ENCODE measurements at regions of chr19 and their contacts with region 1.

Region 1: GRCh38 chr19:21505459-21506451 is at the start of gene ZNF429:
- DNase-seq: peak; percentile 97
- H3K4me3 Mint-ChIP-seq: peak within 1 kb of the TSS; percentile 99
- H3K27ac Mint-ChIP-seq: peak within 1 kb of the TSS; percentile 96
- H3K4me1 Mint-ChIP-seq: peaks cover 3% of the 10 kb centered on the region
- H3K27me3 Mint-ChIP-seq: no peaks in the 10 kb centered on the region
- total RNA-seq, gene ZNF429: 3.0 and 3.3 TPM in 2 replicates

Region 2: DNA sequence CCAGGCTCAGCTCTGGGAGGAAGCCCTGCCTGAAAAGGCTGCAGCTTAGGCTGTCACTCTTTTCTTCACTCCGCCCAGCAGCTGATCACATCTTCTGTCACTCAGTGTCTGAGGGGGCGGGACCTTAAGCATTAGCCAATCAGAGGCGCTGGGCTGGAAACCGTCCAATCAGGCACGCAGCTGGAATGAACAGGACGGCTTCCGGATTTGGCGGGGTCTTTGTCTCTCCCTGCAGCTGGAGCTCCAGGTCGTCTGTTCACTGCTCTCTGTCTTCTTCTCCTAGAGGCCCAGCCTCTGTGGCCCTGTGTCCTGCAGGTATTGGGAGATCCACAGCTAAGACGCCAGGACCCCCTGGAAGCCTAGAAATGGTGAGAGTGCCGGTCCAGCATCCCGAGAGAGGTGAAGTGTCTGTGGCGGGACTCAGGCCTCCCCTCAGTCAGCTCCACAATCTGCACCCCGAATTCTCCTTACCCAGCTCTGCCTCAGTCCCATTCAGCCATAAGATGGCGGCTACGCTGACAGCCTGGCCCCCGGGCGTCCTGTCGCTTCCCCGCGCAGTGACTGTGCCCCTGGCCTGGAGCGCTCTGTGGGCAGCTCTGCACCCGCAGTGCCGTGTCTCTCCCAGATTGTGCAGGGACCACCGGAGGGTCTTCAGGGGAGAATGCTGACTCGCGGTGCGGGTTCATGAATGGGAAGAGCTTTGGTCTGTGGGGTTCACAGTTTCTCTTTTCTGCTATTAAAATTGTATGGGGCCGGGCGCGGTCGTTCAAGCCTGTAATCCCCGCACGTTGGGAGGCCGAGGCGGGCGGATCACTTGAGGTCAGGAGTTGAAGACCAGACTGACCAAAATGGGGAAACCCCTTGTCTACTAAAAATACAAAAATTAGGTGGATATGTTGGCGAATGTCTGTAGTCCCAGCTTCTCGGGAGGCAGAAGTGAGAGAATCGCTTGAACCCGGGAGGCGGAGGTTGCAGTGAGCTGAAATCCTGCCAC is 729.4 kb before region 1 on chr19 and contains the start of gene ZNF66:
- intact Hi-C with region 1: loop called (anchors 10 kb)
- DNase-seq: peak; percentile 98
- H3K4me3 Mint-ChIP-seq: peak within 1 kb of the TSS; percentile 96
- H3K27ac Mint-ChIP-seq: peak within 1 kb of the TSS; percentile 95
- H3K4me1 Mint-ChIP-seq: peaks cover 4% of the 10 kb centered on the region
- H3K27me3 Mint-ChIP-seq: no peaks in the 10 kb centered on the region
- total RNA-seq, gene ZNF66: 7.9 and 10.7 TPM in 2 replicates

Region 3: GRCh38 chr19:21082011-21082975 is 423.5 kb before region 1 on chr19 and contains the start of gene ZNF714:
- intact Hi-C with region 1: loop called (anchors 5 kb)
- DNase-seq: peak; percentile 96
- H3K4me3 Mint-ChIP-seq: peak within 1 kb of the TSS; percentile 96
- H3K27ac Mint-ChIP-seq: peak within 1 kb of the TSS; percentile 99
- H3K4me1 Mint-ChIP-seq: peaks cover 26% of the 10 kb centered on the region
- H3K27me3 Mint-ChIP-seq: no peaks in the 10 kb centered on the region
- total RNA-seq, gene ZNF714: 18.8 and 20.4 TPM in 2 replicates

Region 4: DNA sequence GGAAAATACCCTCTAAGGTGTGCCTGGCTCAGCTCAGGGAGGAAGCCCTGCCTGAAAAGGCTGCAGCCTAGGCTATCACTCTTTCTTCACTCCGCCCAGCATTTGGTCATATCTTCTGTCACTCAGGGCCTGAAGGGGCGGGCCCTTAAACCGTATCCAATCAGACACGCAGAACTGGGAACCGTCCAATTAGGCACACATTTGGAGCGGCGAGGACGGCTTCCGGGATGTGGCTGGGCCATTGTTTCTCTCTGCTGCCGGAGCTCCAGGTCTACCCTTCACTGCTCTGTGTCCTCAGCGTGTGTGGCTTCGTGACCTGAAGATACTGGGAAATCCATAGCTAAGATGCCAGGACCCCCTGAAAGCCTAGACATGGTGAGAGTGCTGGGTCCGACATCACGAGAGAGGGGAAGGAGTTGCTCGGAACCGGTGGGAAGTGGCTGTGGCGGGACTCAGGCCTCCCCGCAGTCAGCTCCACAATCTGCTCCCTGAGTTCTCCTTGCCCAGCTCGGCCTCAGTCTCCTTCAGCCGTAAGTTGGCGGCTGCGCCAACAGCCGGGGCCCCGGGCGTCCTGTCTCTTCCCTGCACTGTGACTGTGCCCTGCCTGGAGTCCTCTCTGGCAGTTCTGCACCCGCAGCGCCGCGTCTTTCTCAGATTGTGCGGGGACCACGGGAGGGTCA is 108.7 kb before region 1 on chr19 and contains the start of gene ZNF493:
- intact Hi-C with region 1: loop called (anchors 1 kb)
- DNase-seq: peak; percentile 96
- H3K4me3 Mint-ChIP-seq: peak within 1 kb of the TSS; percentile 93
- H3K27ac Mint-ChIP-seq: peak within 1 kb of the TSS; percentile 85
- H3K4me1 Mint-ChIP-seq: peaks cover 8% of the 10 kb centered on the region
- H3K27me3 Mint-ChIP-seq: no peaks in the 10 kb centered on the region
- total RNA-seq, gene ZNF493: 12.2 and 12.5 TPM in 2 replicates

Region 5: GRCh38 chr19:21604351-21604926 is 98.7 kb after region 1 on chr19:
- intact Hi-C with region 1: no loop called
- DNase-seq: peak; percentile 59
- H3K4me3 Mint-ChIP-seq: peak overlapping the region; percentile 80
- H3K27ac Mint-ChIP-seq: peak overlapping the region; percentile 22
- H3K4me1 Mint-ChIP-seq: peaks cover 16% of the 10 kb centered on the region
- H3K27me3 Mint-ChIP-seq: no peaks in the 10 kb centered on the region

Region 6: DNA sequence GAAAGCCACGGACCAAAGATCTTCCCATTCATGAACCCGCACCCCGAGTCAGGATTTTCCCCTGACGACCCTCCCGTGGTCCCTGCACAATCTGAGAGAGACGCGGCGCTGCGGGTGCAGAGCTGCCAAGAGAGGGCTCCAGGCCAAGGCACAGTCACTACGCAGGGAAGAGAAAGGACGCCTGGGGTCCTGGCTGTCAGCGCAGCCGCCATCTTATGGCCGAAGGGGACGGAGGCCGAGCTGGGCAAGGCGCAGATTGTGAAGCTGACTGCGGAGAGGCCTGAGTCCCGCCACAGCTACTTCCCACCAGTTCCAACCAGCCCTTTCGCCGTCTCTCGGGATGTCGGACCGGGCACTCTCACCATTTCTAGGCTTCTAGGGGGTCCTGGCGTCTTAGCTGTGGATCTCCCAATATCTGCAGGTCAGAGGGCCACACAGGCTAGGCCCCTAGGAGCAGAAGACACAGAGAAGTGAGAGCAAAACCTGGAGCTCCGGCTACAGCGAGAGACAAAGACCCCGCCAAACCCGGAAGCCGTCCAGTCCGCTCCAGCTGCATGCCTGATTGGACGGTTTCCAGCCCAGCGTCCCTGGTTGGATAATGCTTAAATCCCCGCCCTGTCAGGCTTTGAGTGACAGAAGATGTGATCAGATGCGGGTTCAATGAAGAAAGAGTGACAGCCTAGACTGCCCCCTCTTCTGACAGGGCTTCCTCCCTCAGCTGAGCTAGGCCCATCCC is 261.5 kb after region 1 on chr19 and contains the start of gene ZNF100:
- intact Hi-C with region 1: loop called (anchors 2 kb)
- DNase-seq: peak; percentile 95
- H3K4me3 Mint-ChIP-seq: peak within 1 kb of the TSS; percentile 94
- H3K27ac Mint-ChIP-seq: peak within 1 kb of the TSS; percentile 83
- H3K4me1 Mint-ChIP-seq: peaks cover 17% of the 10 kb centered on the region
- H3K27me3 Mint-ChIP-seq: no peaks in the 10 kb centered on the region
- total RNA-seq, gene ZNF100: 20.8 and 24.1 TPM in 2 replicates

Measured in activated CD4-positive, alpha-beta T cell treated with anti-CD3 and anti-CD28 coated beads, Interleukin-2, amount 10 ng/mL, durations not matched to agents 24 days and 14 days (primary cell).